Right ventricle myocardium superior (tissue), 1 donor: ENCODE measurements at regions of chr12 and their contacts with region 1.

Region 1: DNA sequence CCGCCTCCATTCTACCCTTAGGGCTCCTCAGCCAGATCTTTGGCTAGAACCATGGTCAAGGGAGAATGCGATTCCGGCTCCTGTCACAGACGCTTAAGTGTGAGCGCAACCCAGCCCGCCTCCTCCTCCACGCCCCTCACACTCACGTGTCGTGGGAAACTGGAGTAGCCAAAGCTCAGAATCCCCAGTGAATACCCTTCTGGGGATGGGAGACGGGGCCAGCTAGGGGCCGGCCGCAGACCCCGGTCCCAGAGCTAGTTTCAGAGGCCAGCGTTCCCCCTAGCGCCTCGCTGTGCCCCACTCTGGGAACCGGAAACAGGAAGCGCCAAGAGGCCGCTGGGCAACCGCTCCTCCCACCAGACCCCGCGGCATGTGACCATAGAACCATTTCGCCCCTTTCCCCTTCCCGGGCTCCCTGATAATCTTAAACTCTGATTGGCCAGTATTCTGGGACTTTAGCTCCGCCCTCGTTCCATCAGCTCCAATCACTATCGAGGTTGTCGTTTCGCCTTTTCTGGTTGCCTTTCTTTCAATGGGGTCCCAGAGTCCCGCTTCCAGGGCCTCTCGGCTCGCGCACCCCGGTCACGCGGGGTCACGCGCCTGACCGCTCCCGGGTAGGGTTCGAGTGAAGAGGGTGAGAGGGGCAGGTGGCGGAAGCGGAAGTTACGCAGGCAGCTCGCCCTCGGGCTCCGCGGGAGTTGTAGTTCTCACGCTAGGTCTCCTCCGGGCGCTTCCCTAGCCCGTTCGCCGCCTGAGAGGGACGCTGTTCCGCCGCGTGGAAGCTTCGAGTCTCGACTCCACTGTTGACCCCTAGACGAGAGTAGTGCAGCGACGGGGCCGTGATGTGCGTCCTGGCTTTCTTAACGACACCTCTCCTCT is at the start of gene M6PR:
- DNase-seq: peak; percentile 96
- ATAC-seq: peak; percentile 98
- total RNA-seq, gene M6PR: 88.2 TPM

Region 2: DNA sequence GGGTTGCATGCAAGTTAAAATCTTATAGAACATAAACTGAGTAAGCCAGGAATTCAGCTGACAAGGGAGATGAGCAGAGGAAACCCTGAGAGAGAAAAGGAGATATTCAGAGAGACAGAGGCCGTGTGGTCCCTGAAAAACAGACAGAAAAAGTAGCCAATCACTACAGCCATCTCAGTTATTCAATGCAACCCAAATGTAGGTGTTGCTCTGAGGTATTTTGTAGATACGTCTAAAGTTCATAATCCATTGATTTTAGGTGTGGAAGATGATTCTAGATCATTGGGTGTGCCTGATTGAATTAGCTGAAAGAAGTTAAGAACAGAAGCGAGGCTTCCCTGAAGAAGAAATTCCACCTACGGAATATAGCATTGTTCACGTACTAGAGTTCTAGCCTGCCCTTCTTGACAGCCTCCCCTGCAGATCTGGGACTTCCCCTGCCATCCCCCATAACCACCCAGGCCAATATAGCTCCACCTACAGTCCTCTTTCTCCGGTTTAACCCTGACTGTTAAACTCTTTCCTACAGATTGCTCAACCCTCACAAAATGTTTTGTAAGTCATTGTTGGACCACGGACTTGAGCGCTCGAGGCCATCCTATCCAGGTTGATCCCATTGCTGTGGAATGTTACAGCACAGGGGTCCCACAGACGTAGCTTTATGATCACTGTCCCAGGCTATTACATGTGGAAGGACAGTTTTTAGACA is 358.6 kb before region 1 on chr12:
- intact Hi-C with region 1: no loop called
- DNase-seq: no peak
- ATAC-seq: no peak

Region 3: GRCh38 chr12:8823565-8824300 is 125.8 kb before region 1 on chr12:
- intact Hi-C with region 1: no loop called
- DNase-seq: no peak
- ATAC-seq: peak; percentile 36

Region 4: GRCh38 chr12:9039397-9039977 is 89.9 kb after region 1 on chr12:
- intact Hi-C with region 1: loop called (anchors 5 kb)
- DNase-seq: no peak
- ATAC-seq: peak; percentile 86